Activated CD4-positive, alpha-beta T cell treated with anti-CD3 and anti-CD28 coated beads, Interleukin-2, amount 10 ng/mL, durations not matched to agents 7 days and 5 days (primary cell): ENCODE measurements at regions of chr3 and their contacts with region 1.

Region 1: DNA sequence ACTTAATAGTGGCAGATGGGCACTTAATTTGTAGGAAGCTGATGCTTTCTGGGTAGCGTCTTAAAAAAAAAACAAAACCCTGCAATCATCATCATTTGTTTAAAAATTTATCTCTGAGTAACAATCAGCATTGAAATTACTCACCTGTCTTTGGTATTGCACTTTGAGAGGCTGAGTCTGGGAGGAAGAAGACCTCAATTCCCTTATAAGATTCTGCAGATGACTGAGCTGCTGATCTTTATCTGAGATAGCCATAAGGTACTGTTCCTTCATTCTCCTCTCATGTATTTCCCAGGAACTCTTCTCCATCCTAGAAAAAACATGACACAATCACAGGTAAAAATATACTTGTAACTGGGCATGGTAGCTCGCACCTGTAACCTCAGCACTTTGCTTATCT is 16.4 kb upstream of the HCLS1 start:
- DNase-seq: no peak
- H3K4me3 Mint-ChIP-seq: no peak overlapping the region
- H3K27ac Mint-ChIP-seq: no peak overlapping the region
- H3K4me1 Mint-ChIP-seq: no peaks in the 10 kb centered on the region
- H3K27me3 Mint-ChIP-seq: no peaks in the 10 kb centered on the region

Region 2: GRCh38 chr3:121660356-121661171 is 16.6 kb before region 1 on chr3 and contains the start of gene HCLS1:
- CTCF ChIA-PET with region 1: interaction called, 10 read pairs
- POLR2A ChIA-PET with region 1: no interaction called
- DNase-seq: peak; percentile 84
- H3K4me3 Mint-ChIP-seq: peak within 1 kb of the TSS; percentile 86
- H3K27ac Mint-ChIP-seq: peak within 1 kb of the TSS; percentile 99
- H3K4me1 Mint-ChIP-seq: peaks cover 52% of the 10 kb centered on the region
- H3K27me3 Mint-ChIP-seq: no peaks in the 10 kb centered on the region
- total RNA-seq, gene HCLS1: 339 to 350 TPM